ENCODE measurements at regions of chr5 and their contacts with region 1.

Region 1: GRCh38 chr5:151870820-151871219 is 53.8 kb downstream of the GLRA1 start:
- DNase-seq: no peak
- H3K4me3 ChIP-seq: no peak overlapping the region
- CTCF ChIP-seq: no peak

Region 2: GRCh38 chr5:151406322-151406947 is 464.4 kb before region 1 on chr5:
- in situ Hi-C with region 1: loop called (anchors 10 kb)
- DNase-seq: no peak
- H3K4me3 ChIP-seq: no peak overlapping the region
- CTCF ChIP-seq: peak; percentile 37